MCF 10A (cell line): ENCODE measurements at regions of chrX and their contacts with region 1.

Region 1: GRCh38 chrX:107701493-107702121 is 73.3 kb downstream of the PRPS1 start:
- DNase-seq: no peak
- H3K4me3 Mint-ChIP-seq: no peak overlapping the region
- H3K27ac Mint-ChIP-seq: no peak overlapping the region
- H3K4me1 Mint-ChIP-seq: peaks cover 16% of the 10 kb centered on the region
- H3K27me3 Mint-ChIP-seq: peaks cover 56% of the 10 kb centered on the region
- CTCF ChIP-seq: no peak

Region 2: GRCh38 chrX:107662145-107662544 is 39.5 kb before region 1 on chrX:
- CTCF ChIA-PET with region 1: no interaction called
- POLR2A ChIA-PET with region 1: no interaction called
- intact Hi-C with region 1: no loop called
- DNase-seq: no peak
- H3K4me3 Mint-ChIP-seq: no peak overlapping the region
- H3K27ac Mint-ChIP-seq: peak overlapping the region; percentile 69
- H3K4me1 Mint-ChIP-seq: no peaks in the 10 kb centered on the region
- H3K27me3 Mint-ChIP-seq: peaks cover 42% of the 10 kb centered on the region
- CTCF ChIP-seq: no peak

Region 3: DNA sequence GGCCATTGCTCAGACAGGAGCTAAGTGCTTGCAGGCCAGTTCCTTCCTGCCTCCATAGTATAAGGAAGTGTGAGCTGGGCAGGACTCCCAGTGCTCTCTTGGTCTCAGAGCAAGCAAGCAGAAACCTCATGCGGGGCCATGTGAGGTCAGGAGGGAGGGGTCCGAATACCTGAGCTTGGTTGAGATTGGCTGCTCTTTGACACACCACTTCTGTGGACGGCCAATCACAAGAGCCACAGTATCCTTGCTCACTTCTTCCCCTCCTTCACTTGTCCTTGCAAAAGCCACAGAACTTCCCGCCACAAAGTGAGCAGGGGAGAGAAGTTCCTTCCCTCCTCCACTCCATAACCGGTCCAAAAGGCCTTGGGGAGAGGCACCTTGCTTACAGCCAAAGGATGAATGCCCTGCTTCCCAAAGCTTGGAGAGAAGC is 16.6 kb before region 1 on chrX:
- CTCF ChIA-PET with region 1: interaction called, 4 read pairs
- POLR2A ChIA-PET with region 1: interaction called, 679 read pairs
- intact Hi-C with region 1: no loop called
- DNase-seq: peak; percentile 93
- H3K4me3 Mint-ChIP-seq: no peak overlapping the region
- H3K27ac Mint-ChIP-seq: no peak overlapping the region
- H3K4me1 Mint-ChIP-seq: peaks cover 28% of the 10 kb centered on the region
- H3K27me3 Mint-ChIP-seq: peaks cover 70% of the 10 kb centered on the region
- CTCF ChIP-seq: no peak

Region 4: GRCh38 chrX:107691024-107691448 is 10.6 kb before region 1 on chrX:
- CTCF ChIA-PET with region 1: interaction called, 3 read pairs
- POLR2A ChIA-PET with region 1: interaction called, 48 read pairs
- intact Hi-C with region 1: no loop called
- DNase-seq: peak; percentile 39
- H3K4me3 Mint-ChIP-seq: no peak overlapping the region
- H3K27ac Mint-ChIP-seq: no peak overlapping the region
- H3K4me1 Mint-ChIP-seq: no peaks in the 10 kb centered on the region
- H3K27me3 Mint-ChIP-seq: peaks cover 73% of the 10 kb centered on the region
- CTCF ChIP-seq: no peak

Region 5: DNA sequence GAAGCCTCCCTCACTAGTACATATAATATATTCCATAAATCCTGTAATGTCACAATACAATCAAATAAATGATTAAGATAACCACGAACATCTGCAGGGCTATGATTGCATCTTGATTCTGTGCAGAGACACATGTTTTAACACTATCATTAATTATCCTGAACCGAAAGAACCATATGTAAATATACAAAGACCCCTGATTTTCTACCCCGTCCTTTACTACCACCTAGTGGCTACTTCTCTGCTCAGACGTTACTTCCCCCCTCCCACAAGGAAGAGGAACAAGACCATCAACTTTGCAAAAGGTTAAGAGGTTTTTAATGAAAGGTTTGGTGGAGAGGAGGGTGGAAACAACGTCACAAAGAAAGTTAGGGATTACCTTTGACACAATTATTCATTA is 602.6 kb after region 1 on chrX:
- CTCF ChIA-PET with region 1: no interaction called
- POLR2A ChIA-PET with region 1: no interaction called
- intact Hi-C with region 1: no loop called
- DNase-seq: peak; percentile 24
- H3K4me3 Mint-ChIP-seq: no peak overlapping the region
- H3K27ac Mint-ChIP-seq: no peak overlapping the region
- H3K4me1 Mint-ChIP-seq: peaks cover 4% of the 10 kb centered on the region
- H3K27me3 Mint-ChIP-seq: peaks cover 25% of the 10 kb centered on the region
- CTCF ChIP-seq: peak; percentile 37